ENCODE measurements at regions of chr12 and their contacts with region 1.

Region 1: GRCh38 chr12:109844983-109845823 is 12.0 kb upstream of the TRPV4 start:
- DNase-seq: peak; percentile 98
- H3K4me3 Mint-ChIP-seq: peak overlapping the region; percentile 68
- H3K27ac Mint-ChIP-seq: peak overlapping the region; percentile 70
- H3K4me1 Mint-ChIP-seq: peaks cover 3% of the 10 kb centered on the region
- H3K27me3 Mint-ChIP-seq: peaks cover under 1% of the 10 kb centered on the region

Region 2: GRCh38 chr12:109804820-109805761 is 40.1 kb before region 1 on chr12:
- intact Hi-C with region 1: loop called (anchors 1 kb)
- DNase-seq: peak; percentile 90
- H3K4me3 Mint-ChIP-seq: no peak overlapping the region
- H3K27ac Mint-ChIP-seq: no peak overlapping the region
- H3K4me1 Mint-ChIP-seq: peaks cover 2% of the 10 kb centered on the region
- H3K27me3 Mint-ChIP-seq: no peaks in the 10 kb centered on the region

Region 3: DNA sequence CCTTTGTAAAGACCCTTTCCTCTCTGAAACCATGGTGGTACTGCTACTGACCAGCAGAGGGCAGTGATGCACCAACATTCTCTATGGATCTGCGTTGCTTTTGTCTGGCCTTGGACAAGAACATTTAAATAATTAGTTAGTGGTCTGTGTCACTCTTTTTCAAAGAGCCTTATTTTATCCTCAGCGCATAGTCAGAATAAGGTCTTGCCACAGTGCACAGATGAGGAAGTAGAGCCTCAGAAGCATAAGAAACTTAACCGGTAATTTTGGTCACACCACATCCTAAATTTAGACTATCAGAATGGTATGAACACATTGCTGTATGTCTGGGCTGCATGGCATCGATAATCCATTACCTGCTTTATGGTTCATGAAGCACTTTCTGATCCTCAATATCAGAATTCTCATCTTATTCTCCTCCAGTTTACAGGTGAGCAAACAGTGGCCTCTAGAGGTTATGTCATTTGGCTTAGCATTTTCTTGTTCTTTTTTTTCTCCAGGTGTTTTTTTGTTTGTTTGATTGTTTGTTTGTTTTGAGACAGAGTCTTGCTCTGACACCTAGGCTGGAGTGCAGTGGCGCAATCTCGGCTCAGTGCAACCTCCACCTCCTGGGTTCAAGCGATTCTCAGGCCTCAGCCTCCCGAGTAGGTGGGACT is 255.2 kb after region 1 on chr12:
- intact Hi-C with region 1: no loop called
- DNase-seq: peak; percentile 89
- H3K4me3 Mint-ChIP-seq: peak overlapping the region; percentile 0
- H3K27ac Mint-ChIP-seq: peak overlapping the region; percentile 36
- H3K4me1 Mint-ChIP-seq: peaks cover 12% of the 10 kb centered on the region
- H3K27me3 Mint-ChIP-seq: no peaks in the 10 kb centered on the region

Region 4: GRCh38 chr12:110224379-110225304 is 379.4 kb after region 1 on chr12:
- intact Hi-C with region 1: no loop called
- DNase-seq: no peak
- H3K4me3 Mint-ChIP-seq: no peak overlapping the region
- H3K27ac Mint-ChIP-seq: no peak overlapping the region
- H3K4me1 Mint-ChIP-seq: no peaks in the 10 kb centered on the region
- H3K27me3 Mint-ChIP-seq: peaks cover 20% of the 10 kb centered on the region